ENCODE measurements at regions of chr15 and their contacts with region 1.

Region 1: GRCh38 chr15:55588070-55588814 is at the start of gene PYGO1:
- DNase-seq: peak; percentile 69 to 83
- ATAC-seq: peak; percentile 75 to 86 (median 82)
- H3K4me3 ChIP-seq: peak within 1 kb of the TSS; percentile 77
- H3K27ac ChIP-seq: peak within 1 kb of the TSS; percentile 96
- H3K4me1 ChIP-seq: peaks cover 2% of the 10 kb centered on the region
- H3K27me3 ChIP-seq: no peaks in the 10 kb centered on the region
- CTCF ChIP-seq: no peak
- total RNA-seq, gene PYGO1: 18.8 to 30.2 (median 28.5) TPM

Region 2: GRCh38 chr15:55434989-55435825 is 153.0 kb before region 1 on chr15:
- intact Hi-C with region 1: no loop called
- DNase-seq: no peak
- ATAC-seq: peak in 2 of 4 donors; percentile 49 to 74
- H3K4me3 ChIP-seq: no peak overlapping the region
- H3K27ac ChIP-seq: no peak overlapping the region
- H3K4me1 ChIP-seq: no peaks in the 10 kb centered on the region
- H3K27me3 ChIP-seq: no peaks in the 10 kb centered on the region
- CTCF ChIP-seq: peak; percentile 38

Region 3: DNA sequence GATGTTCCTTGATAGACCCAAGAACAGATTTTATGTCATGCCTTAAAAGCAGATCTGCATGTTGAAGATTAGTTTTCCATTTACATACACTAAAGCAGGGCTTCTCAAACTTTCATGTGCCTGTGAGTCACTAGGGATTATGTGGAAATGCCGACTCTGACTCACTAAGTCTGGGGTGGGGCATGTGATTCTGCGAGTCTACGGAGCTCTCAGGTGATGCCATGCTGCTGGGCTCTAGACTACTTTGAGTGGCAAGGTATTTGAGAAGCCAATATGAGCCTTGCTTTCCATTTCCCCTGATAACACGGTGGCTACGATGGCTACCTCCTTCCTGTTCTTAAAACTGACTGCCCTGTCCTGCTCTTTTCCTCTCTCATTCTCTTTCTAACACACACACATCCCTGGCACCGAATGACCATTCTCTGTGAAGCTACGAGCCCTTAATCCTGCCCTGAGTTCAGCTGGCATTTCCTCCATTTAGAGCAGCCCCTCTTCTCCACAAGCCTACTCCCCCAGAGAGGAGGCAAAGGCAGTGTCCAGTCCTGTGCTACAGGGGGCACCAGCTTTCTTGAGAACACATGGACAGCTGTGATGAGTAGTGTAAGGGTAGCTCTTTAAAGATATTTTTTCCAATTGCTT is 39.6 kb after region 1 on chr15:
- intact Hi-C with region 1: loop called in 1 of 2 experiments (anchors 2 kb)
- DNase-seq: peak; percentile 22 to 65
- ATAC-seq: peak; percentile 86 to 95 (median 90)
- H3K4me3 ChIP-seq: peak overlapping the region; percentile 26
- H3K27ac ChIP-seq: peak overlapping the region; percentile 85
- H3K4me1 ChIP-seq: peaks cover 27% of the 10 kb centered on the region
- H3K27me3 ChIP-seq: no peaks in the 10 kb centered on the region
- CTCF ChIP-seq: no peak

Region 4: GRCh38 chr15:55637086-55637485 is 48.8 kb after region 1 on chr15:
- intact Hi-C with region 1: loop called in 1 of 2 experiments (anchors 5 kb)
- DNase-seq: no peak
- ATAC-seq: peak in 3 of 4 donors; percentile 27 to 66 (median 44)
- H3K4me3 ChIP-seq: no peak overlapping the region
- H3K27ac ChIP-seq: peak overlapping the region; percentile 75
- H3K4me1 ChIP-seq: peaks cover 14% of the 10 kb centered on the region
- H3K27me3 ChIP-seq: no peaks in the 10 kb centered on the region
- CTCF ChIP-seq: no peak

Measured in psoas muscle (tissue), 8 donors.